ENCODE measurements at regions of chr3 and their contacts with region 1.

Region 1: DNA sequence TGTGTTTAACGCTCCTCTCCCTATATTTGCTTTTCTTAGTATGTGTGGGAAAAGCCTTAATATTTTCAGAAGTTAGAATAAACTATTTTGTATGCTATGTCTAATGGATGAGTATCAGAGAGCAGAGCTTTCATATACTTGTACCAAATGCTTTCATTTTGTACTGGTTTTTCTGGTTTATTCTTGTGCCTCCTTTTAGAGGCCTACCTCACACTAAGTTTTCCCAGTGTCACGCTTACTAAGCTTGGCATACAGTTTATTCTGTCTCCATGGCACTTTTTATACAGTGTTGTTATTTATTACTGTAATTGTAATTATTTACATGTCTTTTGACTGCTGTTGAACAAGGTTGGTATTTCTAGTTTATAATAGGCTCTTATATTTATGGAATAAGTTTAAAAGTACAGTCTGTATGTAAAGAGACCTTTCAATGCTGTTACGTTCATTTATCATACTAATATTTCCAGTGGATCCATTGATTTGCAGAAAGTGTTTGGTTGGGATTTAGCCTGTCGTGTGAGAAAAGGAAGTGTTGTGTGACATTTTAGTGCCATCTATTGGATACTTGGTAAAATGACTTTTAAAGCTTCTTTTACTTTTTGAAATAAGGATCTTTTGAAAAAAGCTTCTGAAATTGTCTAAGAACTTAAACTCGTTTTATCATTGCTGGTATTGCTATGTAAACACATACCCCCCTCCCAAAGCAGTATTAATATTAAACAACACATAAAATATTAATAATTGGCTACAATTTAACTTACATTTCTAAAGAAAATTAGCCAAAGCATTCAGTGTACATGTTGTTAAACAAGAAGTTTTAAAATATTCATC is 5.2 kb upstream of the EBLN2 start:
- DNase-seq: no peak

Region 2: DNA sequence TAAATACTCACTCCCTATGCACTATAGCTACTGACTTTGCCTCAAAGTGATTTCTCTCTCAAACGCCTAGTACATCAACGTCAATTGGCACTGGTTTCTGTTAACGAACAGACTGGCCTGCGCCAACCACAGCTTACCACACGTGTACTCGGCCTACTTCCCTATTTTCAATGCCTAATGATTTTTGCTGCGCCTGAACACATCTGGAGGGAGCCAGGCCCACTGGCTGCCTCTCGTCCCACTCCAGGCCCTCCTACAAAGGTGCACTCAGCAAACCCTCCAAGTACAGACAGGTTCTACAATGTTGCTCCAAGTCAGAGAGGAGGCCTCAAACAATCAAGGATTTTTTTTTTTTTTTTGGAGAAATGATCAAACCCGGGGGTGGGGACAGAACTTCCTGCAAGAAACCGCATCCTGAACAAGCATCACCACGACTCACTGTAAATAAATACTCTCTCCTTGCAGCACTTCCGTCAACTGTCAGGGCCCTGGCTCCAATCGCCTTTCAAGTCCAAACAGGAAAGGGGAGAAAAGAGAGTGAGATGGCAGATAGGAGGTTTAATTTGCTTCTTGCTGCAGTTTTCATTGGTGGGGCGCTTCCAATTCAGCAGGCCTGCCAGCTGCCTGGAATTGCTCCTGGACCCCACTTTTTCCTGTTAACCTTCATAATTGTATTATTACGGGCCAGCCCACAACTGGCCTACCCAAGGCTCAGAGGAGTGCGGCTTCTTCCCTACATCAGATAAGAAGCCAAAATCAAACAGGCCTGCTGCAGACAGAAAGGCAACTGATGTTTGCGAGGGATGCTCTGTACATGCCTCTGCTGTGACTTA is 1612.0 kb before region 1 on chr3:
- intact Hi-C with region 1: no loop called
- DNase-seq: peak; percentile 86

Region 3: DNA sequence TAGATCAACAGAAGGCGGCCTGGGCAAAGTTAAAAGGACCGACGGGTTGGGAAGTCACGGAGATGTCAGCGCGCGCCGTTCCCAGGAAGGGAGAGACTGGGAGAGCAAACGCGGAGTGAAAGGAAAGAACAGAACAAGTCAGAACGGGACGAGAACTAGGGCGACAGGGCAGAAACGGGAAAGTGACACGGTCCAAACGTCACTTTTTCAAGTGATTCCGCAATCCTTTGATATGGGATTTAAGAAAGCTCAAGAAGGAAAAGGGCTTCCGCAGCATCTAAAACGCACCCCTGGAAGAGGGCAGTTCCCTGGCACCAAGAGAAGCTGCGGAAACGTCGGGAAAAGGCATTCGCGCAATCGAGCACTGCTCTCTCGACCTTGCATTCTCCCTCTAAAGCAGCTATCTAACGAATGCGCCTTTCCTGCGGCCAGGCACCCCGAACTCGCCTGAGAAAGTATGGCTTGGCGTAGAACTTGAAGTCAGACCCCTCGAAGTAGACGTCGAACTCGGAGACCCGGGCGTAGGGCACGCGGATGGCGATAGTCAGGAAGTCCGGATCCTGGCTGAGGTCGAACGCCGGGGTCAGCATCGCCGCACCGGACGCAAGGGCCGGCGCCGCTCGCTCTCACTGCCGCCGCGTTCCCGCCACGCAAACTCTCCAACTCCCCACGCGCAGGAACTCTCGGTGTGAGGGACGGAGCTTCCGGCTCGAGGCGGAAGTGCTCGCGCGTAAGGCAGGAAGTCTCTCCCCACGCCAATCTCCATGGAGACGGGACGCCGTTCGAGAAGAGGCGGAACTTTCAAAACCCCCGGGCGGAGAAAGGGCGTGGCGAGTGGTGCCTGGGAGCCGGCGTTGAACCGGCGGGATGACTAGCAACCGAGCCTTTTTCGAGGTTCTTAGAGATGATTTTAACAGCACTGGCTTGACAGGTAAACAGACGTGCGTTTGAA is 208.2 kb before region 1 on chr3 and contains the start of gene SHQ1:
- intact Hi-C with region 1: loop called in 1 of 2 experiments (anchors 10 kb)
- DNase-seq: peak; percentile 99
- total RNA-seq, gene SHQ1: 15.0 to 15.2 TPM

Region 4: GRCh38 chr3:72949016-72949415 is 107.2 kb before region 1 on chr3:
- intact Hi-C with region 1: loop called (anchors 10 kb)
- DNase-seq: no peak

Region 5: GRCh38 chr3:73029321-73029796 is 26.9 kb before region 1 on chr3:
- intact Hi-C with region 1: no loop called
- DNase-seq: no peak

Measured in posterior vena cava (tissue), 2 donors.